K562 (cell line): ENCODE measurements at regions of chr6 and their contacts with region 1.

Region 1: DNA sequence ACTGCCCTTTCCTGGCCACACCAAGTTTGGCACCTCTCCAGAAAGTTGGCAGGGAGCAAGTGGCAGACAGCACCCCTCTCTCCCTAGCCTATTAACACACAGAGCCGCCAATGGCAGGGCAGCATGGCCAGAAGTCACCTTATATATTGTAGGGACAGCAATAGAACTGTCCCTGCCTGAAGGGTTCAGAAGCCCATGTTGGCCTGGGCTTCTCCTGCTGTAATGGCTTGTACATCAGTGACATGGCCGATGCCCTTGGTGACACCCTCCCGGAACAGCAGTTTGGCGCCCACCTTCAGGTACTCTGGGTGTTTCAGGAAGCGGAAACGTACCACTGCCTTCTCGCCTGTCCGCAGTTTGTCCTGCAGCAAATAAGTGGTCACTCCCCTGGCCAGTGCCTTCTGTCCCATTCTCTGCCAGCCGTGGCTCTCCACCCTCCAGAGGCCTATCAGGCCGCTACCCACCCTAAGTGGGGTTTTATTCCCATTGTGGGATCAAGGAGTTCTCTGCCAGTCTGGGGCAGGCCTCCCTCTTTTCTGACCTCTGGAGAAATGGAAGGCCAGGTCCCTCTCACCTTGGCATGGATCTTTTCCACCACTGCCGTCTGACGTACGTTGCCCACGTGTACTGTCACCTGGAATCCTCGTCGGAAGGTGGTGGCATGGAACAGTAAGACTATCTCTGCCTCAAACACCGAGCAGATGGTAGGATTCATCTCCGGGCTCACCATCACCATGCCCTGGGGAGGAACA is 7.5 kb downstream of the GTPBP2 start:
- DNase-seq: no peak
- ATAC-seq: no peak
- H3K4me3 ChIP-seq: no peak overlapping the region
- H3K27ac ChIP-seq: no peak overlapping the region
- H3K4me1 ChIP-seq: peaks cover 16 to 17% of the 10 kb centered on the region in 2 experiments
- H3K27me3 ChIP-seq: no peaks in the 10 kb centered on the region
- CTCF ChIP-seq: no peak
- EP300 ChIP-seq: no peak
- POLR2A ChIP-seq: 0 out of 2 replicates have a peak, but pooled peaks have one; percentile 9
- RAD21 ChIP-seq: no peak

Region 2: DNA sequence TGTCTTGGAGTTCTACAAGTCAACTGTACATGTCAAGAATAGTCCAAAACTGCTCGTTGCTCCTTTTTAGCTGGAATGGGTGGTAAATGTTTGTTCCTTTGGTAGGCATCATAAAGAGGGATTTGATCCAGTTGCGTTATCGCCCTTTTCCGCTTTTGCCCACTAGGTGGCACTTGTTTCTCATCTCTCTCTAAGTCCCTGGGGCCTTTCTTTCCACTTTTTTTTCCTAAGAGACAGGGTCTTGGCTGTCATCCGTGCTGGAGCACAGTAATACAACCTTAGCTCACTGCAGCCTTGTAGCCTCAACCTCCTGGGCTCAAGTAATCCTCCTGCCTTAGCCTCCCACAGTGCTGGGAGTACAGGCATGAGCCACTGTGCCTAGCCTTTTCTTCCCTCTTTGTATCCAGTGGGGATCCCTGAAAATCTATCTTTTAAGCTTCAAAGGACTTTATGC is 13.3 kb before region 1 on chr6:
- CTCF ChIA-PET with region 1: interaction called, 3 read pairs
- POLR2A ChIA-PET with region 1: interaction called, 135 read pairs
- in situ Hi-C with region 1: no loop called
- intact Hi-C with region 1: no loop called
- DNase-seq: peak; percentile 72 to 88 (median 74)
- ATAC-seq: peak; percentile 93
- H3K4me3 ChIP-seq: no peak overlapping the region
- H3K27ac ChIP-seq: no peak overlapping the region; the same call in 2 of the 3 replicates
- H3K4me1 ChIP-seq: peaks cover 3 to 14% of the 10 kb centered on the region in 2 experiments; a peak in 4 of 5 replicates
- H3K27me3 ChIP-seq: no peaks in the 10 kb centered on the region
- CTCF ChIP-seq: peak; percentile 73 to 90 (median 87)
- EP300 ChIP-seq: no peak
- POLR2A ChIP-seq: no peak
- RAD21 ChIP-seq: peak; percentile 75 to 81

Region 3: GRCh38 chr6:43635387-43636307 is 14.0 kb after region 1 on chr6 and contains the start of gene MAD2L1BP:
- CTCF ChIA-PET with region 1: no interaction called
- POLR2A ChIA-PET with region 1: interaction called, 206 read pairs
- in situ Hi-C with region 1: no loop called
- intact Hi-C with region 1: no loop called
- DNase-seq: peak; percentile 87 to 96 (median 87)
- ATAC-seq: peak; percentile 80
- H3K4me3 ChIP-seq: peak within 1 kb of the TSS; percentile 75
- H3K27ac ChIP-seq: peak within 1 kb of the TSS; percentile 93
- H3K4me1 ChIP-seq: peaks cover 48 to 69% of the 10 kb centered on the region in 2 experiments
- H3K27me3 ChIP-seq: no peaks in the 10 kb centered on the region; a peak in 1 of 5 replicates
- CTCF ChIP-seq: peak in 1 of 3 experiments; percentile 29; a peak in 2 of 6 replicates
- EP300 ChIP-seq: peak; percentile 66
- POLR2A ChIP-seq: peak; percentile 99
- RAD21 ChIP-seq: peak; percentile 9 to 24; a peak in 1 of 4 replicates
- polyA plus RNA-seq, gene MAD2L1BP: 241 to 321 TPM